ENCODE measurements at regions of chr9 and their contacts with region 1.

Region 1: DNA sequence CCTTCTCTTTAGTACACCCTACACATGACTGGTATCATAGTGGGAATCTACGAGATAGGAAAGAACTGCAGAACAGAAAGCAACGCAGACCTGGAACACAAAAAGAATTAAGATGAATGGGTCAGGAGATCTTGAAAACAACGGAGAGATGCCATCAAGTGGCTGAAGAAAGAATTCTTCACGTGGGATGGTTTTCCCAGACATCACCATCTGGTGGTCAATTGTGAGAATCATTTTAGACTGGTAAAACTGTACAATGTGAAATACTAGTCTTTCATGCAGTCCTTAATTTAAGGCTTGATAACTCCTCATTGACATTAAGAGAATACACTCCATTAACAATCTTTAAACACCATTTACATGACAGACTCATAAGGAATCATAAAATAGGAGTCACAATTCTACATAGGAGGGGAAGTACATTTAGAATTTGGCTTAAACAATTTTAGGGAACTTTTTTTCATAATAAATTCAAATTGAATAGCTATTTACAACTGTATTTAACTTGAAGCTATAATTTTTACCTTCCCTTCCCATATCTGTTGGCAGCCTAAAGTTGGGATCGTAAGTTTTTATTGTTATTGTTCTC is 128.4 kb upstream of the TRPM3 start:
- DNase-seq: peak; percentile 27
- ATAC-seq: peak; percentile 83
- H3K4me3 ChIP-seq: no peak overlapping the region
- H3K27ac ChIP-seq: no peak overlapping the region
- H3K4me1 ChIP-seq: no peaks in the 10 kb centered on the region
- H3K27me3 ChIP-seq: no peaks in the 10 kb centered on the region
- CTCF ChIP-seq: peak; percentile 70; the same call in 1 of the 2 replicates

Region 2: DNA sequence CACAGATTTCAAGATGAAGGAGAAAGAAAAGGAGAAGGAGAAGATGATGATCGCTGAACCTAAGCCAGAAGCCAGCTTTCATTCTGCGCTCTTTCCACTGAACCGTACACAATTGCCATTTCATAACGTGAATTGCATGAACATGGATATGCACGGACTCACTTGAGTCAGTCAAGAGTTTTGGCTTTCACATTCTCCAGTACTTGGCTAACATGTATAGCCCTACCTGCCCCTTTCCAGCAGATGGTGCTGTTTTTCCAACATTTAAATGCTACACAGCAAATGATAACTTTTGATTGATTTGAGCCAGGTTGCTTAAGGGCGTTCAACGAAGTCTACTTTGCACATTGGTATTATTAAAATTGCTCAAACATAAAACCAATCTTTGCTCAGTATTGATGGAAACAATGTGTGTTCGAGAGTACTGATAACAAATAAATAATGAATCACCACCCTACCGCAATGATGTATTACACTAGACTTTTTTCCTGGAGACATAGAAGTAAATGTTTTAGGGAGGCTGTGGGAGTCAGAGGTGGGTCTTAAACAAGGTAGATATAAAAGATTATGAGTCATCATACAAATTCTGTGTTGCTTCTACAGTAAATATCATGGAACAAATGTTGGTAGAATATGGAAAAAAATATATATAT is 324.8 kb before region 1 on chr9:
- CTCF ChIA-PET with region 1: no interaction called
- POLR2A ChIA-PET with region 1: no interaction called
- in situ Hi-C with region 1: no loop called
- intact Hi-C with region 1: loop called (anchors 1 kb)
- DNase-seq: peak; percentile 10
- ATAC-seq: peak; percentile 86
- H3K4me3 ChIP-seq: no peak overlapping the region
- H3K27ac ChIP-seq: no peak overlapping the region
- H3K4me1 ChIP-seq: no peaks in the 10 kb centered on the region
- H3K27me3 ChIP-seq: no peaks in the 10 kb centered on the region
- CTCF ChIP-seq: peak; percentile 66

Region 3: DNA sequence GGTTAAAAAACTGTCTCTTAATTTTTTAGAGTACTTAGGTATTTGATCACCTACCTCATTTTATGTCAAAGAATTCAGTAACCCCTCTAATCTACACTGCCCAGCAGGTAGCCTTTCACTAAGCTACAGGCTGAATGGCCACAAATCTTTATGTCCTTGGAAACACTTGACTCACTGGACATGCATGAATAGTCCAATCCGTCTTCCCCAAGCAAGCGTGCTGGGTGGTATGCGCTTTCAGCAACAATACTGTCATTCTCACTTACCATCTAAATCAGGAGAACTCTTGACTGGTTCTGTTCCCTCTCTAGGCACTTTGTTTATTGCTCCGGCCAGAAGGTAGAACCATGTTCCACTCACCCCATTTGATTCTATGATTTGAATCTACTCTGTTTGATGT is 201.5 kb before region 1 on chr9:
- CTCF ChIA-PET with region 1: no interaction called
- POLR2A ChIA-PET with region 1: no interaction called
- in situ Hi-C with region 1: no loop called
- intact Hi-C with region 1: no loop called
- DNase-seq: no peak
- ATAC-seq: no peak
- H3K4me3 ChIP-seq: no peak overlapping the region
- H3K27ac ChIP-seq: no peak overlapping the region
- H3K4me1 ChIP-seq: no peaks in the 10 kb centered on the region
- H3K27me3 ChIP-seq: no peaks in the 10 kb centered on the region
- CTCF ChIP-seq: no peak